Activated CD4-positive, alpha-beta T cell treated with anti-CD3 and anti-CD28 coated beads, Interleukin-2, amount 10 ng/mL, durations not matched to agents 24 days and 14 days (primary cell): ENCODE measurements at regions of chr15 and their contacts with region 1.

Region 1: DNA sequence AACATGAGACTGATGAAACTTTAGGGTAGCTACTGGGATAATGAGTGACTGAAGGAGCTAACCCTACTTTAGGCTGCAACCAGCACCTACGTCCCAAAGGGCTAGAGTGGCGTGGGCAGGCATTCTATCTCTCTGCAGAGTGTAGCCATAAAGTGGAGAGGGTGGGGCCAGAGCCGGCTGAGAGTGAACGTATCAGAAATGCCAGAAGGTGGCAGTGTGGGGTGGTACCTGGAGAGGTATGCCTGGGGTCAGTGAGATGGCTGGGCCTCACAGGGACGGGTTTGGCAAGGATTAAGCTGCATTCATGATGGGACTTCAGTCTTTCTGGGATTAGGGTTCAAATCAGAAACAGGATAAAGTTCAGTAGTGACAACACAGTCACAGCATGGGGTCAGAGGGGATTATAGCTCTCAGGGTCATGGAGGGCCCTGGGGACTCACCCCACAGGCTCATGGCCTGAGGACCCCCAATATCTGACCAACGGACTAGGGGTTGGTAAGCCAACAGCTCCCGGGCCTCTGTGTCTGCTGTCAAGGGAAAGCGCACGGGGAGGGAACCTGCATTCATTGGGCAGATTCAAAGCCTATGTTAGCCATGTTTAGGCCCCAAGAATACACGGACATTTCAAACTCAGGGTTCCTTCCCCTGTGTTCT is 86.5 kb upstream of the FOXB1 start:
- DNase-seq: peak; percentile 92
- H3K4me3 Mint-ChIP-seq: no peak overlapping the region
- H3K27ac Mint-ChIP-seq: peak overlapping the region; percentile 76
- H3K4me1 Mint-ChIP-seq: peaks cover 25% of the 10 kb centered on the region
- H3K27me3 Mint-ChIP-seq: peaks cover 23% of the 10 kb centered on the region

Region 2: GRCh38 chr15:59741274-59741906 is 176.2 kb before region 1 on chr15:
- intact Hi-C with region 1: no loop called
- DNase-seq: peak; percentile 62
- H3K4me3 Mint-ChIP-seq: no peak overlapping the region
- H3K27ac Mint-ChIP-seq: no peak overlapping the region
- H3K4me1 Mint-ChIP-seq: no peaks in the 10 kb centered on the region
- H3K27me3 Mint-ChIP-seq: peaks cover 15% of the 10 kb centered on the region

Region 3: DNA sequence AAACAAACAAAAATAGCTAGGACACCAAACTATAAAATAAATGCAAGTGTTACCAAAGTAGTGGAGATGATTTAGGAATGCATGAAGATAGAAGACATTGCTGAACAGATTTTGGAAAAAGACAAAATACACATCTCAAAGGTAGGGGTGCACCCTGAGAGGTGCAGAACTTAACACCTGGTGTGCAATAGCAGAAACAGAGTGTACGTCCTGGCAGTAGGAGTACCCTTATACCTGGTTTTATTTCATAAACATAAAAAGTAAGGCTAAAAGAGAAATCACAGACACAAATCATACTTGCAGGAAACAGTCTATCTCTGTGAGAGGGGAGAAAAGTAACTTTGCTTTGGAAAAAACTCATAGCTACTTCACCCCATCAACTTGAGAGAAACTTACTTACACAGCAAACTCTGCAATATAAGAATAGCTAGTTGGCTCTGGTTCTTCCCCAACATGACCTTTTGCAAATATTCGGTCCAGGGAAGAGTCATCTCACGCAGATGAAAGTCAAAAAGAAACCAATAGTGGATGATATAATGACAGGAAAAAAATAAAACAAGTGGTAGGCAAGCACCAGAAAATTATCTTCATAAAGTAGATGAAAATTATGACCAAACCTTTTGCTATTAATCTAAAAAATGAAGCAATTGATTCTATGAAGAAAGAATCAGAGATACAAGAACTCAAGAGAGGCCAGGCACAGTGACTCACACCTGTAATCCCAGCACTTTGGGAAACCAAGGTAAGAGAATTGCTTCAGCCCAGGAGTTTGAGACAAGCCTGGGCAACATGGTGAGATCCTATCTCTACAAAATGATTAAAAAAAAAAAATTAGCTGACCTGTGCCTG is 119.7 kb before region 1 on chr15:
- intact Hi-C with region 1: loop called (anchors 1 kb)
- DNase-seq: peak; percentile 61
- H3K4me3 Mint-ChIP-seq: peak overlapping the region; percentile 47
- H3K27ac Mint-ChIP-seq: peak overlapping the region; percentile 67
- H3K4me1 Mint-ChIP-seq: peaks cover 46% of the 10 kb centered on the region
- H3K27me3 Mint-ChIP-seq: peaks cover 22% of the 10 kb centered on the region

Region 4: GRCh38 chr15:59997070-59997701 is 79.6 kb after region 1 on chr15:
- intact Hi-C with region 1: loop called (anchors 2 kb)
- DNase-seq: peak; percentile 91
- H3K4me3 Mint-ChIP-seq: peak overlapping the region; percentile 85
- H3K27ac Mint-ChIP-seq: peak overlapping the region; percentile 71
- H3K4me1 Mint-ChIP-seq: peaks cover 45% of the 10 kb centered on the region
- H3K27me3 Mint-ChIP-seq: peaks cover 94% of the 10 kb centered on the region

Region 5: GRCh38 chr15:60128000-60128376 is 210.4 kb after region 1 on chr15:
- intact Hi-C with region 1: loop called (anchors 5 kb)
- DNase-seq: no peak
- H3K4me3 Mint-ChIP-seq: peak overlapping the region; percentile 86
- H3K27ac Mint-ChIP-seq: peak overlapping the region; percentile 84
- H3K4me1 Mint-ChIP-seq: peaks cover 51% of the 10 kb centered on the region
- H3K27me3 Mint-ChIP-seq: peaks cover 12% of the 10 kb centered on the region

Region 6: GRCh38 chr15:60255390-60255789 is 337.8 kb after region 1 on chr15:
- intact Hi-C with region 1: loop called (anchors 5 kb)
- DNase-seq: peak; percentile 77
- H3K4me3 Mint-ChIP-seq: no peak overlapping the region
- H3K27ac Mint-ChIP-seq: no peak overlapping the region
- H3K4me1 Mint-ChIP-seq: peaks cover 7% of the 10 kb centered on the region
- H3K27me3 Mint-ChIP-seq: peaks cover 66% of the 10 kb centered on the region

Region 7: DNA sequence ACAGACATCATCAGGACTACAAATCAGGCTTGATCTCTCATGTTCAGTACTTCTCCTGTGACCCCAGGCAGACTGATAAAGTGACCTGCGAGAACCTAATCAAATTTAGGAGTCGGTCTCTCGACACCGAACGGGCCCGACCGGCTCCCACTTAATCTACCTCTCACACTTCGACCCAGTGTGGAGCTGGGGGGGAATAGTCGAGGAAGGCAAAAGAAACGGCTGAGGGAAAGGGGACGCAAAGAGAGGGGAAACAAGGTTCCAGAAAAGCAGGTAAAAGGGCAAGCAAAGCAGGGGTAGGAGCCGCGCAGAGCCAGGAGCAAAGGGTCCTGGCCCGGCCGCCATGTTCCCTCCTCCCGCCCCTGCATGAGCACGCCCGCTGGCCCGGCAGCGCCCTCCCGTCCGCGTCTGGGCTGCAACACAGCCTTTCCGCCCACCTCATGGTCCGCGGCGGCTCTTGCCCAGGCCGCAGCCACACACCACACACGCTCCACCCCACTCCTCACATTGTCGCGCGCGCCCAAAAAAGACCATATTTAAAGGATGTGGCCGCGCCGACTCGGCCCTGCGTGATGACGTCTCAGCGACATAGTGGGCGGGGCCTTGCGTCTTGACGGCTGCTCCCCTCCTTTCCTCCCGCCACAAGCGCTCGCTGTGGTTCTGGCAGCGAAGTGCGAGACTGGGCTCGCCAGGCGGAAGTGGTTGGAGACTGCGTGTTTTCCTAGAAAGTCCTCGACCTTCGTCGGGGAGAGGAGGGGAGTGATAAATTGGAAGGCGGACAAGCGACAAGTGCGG is 561.1 kb after region 1 on chr15 and contains the start of gene ICE2:
- intact Hi-C with region 1: loop called (anchors 1 kb)
- DNase-seq: peak; percentile 99
- H3K4me3 Mint-ChIP-seq: peak within 1 kb of the TSS; percentile 95
- H3K27ac Mint-ChIP-seq: peak within 1 kb of the TSS; percentile 99
- H3K4me1 Mint-ChIP-seq: peaks cover 37% of the 10 kb centered on the region
- H3K27me3 Mint-ChIP-seq: no peaks in the 10 kb centered on the region
- total RNA-seq, gene ICE2: 55.4 and 62.6 TPM in 2 replicates

Region 8: DNA sequence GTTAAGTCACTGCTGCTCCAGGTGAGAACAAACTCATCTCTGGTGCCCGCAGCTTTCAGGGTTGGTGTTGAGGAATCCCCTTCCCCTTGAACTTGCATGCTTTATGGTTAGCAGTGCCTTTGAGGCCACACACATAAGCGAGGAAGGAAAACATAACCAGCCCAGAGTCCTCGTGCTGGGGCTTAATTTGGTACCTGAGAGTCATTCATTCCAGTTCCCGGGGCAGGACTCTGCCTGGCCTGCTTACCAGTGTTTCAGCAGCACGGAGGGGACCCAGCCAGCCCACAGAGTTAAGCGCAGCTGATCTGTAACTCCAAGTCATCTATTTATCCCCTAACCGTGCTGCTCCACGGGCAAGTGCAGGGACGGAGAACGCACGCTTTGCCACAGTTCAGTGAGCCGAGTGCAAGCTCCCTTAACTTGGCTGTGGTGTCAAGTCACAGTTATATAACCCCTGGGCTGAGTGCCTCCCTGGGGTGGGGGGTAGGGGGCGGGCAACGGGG is 863.6 kb after region 1 on chr15:
- intact Hi-C with region 1: no loop called
- DNase-seq: no peak
- H3K4me3 Mint-ChIP-seq: no peak overlapping the region
- H3K27ac Mint-ChIP-seq: no peak overlapping the region
- H3K4me1 Mint-ChIP-seq: peaks cover 23% of the 10 kb centered on the region
- H3K27me3 Mint-ChIP-seq: no peaks in the 10 kb centered on the region